Cardiac septum (tissue), 1 donor: ENCODE measurements at regions of chr17 and their contacts with region 1.

Region 1: GRCh38 chr17:15260376-15261257 is 4.5 kb downstream of the PMP22 start:
- DNase-seq: peak; percentile 92

Region 2: DNA sequence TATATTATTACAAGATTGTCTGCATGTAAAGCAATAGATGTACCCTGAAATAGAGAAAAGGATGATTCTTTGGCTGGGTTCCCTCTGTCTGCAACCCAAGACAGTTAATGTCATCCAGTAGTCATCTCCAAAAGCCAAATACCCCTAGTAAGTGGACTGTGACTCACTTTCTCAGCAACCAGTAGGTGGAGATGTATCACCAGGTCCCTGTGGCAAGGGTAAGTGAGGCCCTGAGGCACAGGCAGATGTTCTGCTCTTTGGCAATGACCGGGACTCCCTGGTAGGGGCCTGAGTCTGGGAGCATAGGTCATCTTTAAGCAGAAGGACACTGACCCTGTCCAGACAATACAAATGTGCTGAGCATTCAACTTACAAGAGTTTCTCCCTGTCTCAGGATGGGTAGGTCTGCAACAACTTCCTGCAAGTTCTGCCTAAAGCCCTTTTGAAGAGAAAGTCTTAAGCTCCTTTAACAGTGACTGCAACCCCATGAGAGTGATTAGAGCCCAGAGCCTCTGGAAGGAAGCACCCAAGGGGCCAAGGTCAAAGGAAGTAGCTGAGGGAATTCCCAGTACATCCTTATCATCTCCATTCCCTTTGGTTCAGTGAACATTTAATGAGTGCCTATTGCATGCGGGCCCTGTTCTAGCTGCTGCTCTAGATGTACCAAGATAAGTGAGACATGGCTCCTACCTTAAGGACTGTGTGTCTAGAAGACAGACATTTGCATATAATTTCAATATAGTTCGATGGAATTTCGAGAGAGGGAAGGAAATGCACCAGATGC is 27.4 kb before region 1 on chr17:
- intact Hi-C with region 1: loop called (anchors 2 kb)
- DNase-seq: no peak

Region 3: DNA sequence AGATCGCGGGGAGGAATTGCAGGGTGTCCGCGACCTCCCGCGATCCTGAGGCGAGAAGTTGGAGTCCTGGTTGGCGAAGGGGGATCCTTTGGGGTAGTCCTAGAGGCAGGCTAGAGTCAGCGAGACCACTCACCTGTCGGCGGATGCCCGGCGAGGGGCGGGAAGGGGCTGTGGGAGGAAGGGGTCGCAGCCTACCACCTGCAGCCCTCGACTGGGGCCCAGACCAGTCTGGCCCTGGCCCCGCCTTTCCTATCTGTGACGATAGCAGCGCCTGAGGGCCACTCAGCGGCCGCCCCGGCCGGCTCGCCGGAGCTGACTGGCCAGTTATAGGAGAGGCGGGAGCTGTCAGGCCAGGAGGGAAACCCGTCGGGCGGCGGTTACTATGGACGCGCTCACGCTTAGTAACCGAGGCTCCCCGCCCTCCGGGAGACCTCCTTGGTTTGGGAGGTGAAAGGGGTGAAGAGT is 80.8 kb after region 1 on chr17 and contains the start of gene TEKT3:
- intact Hi-C with region 1: loop called (anchors 5 kb)
- DNase-seq: peak; percentile 89
- total RNA-seq, gene TEKT3: 0.86 TPM

Region 4: DNA sequence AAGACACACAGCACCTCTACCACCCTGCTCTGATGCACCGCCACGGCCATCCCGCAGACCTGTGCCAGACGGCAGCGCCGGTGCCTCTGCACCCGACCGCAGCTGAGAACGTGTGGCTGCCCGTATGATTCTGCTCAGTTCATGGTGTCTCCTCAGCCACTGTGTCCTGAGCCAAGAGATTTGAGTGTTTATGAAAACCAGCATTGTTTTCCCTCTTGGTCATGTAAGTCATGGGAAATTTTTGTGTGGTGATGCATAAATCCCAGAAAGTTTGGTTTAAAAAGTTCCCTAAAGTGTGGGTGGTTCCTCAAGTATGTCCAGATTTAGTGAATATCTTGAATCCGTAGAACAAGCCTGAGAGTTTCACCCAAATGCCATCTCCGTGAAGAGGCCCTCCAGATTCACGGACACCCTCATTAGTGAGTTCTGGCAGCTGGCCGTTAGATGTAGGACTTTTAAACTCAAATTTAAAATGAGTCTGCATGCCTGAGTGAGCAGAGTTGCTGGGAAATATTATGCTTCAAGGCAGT is 149.2 kb after region 1 on chr17:
- intact Hi-C with region 1: loop called (anchors 5 kb)
- DNase-seq: no peak

Region 5: GRCh38 chr17:15456972-15457722 is 196.5 kb after region 1 on chr17:
- intact Hi-C with region 1: loop called (anchors 2 kb)
- DNase-seq: no peak

Region 6: GRCh38 chr17:15502369-15503112 is 241.9 kb after region 1 on chr17:
- intact Hi-C with region 1: loop called (anchors 1 kb)
- DNase-seq: peak; percentile 96

Region 7: DNA sequence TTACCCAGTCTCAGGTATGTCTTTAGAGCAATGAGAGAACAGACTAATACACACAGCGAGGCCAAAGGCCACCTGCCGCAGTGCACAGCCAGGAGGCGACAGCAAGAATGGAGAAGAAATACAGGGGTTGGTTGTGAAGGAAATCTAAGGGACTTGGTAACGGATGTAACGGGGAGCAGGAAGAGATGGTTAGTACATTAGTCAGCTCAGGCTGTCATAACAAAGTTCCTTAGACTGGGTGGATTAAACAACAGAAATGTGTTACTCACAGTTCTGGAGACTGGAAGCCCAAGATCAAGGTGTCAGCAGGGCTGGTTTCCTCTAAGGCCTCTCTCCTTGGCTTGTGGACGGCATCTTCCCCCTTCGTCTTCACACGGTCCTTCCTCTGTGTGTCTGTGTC is 255.5 kb after region 1 on chr17:
- intact Hi-C with region 1: no loop called
- DNase-seq: no peak